Activated CD4-positive, alpha-beta T cell treated with anti-CD3 and anti-CD28 coated beads, Interleukin-2, amount 10 ng/mL, durations not matched to agents 24 days and 14 days (primary cell): ENCODE measurements at regions of chr7 and their contacts with region 1.

Region 1: GRCh38 chr7:82572195-82572880 is 128.8 kb upstream of the CACNA2D1 start:
- DNase-seq: peak; percentile 90
- H3K4me3 Mint-ChIP-seq: no peak overlapping the region
- H3K27ac Mint-ChIP-seq: no peak overlapping the region
- H3K4me1 Mint-ChIP-seq: no peaks in the 10 kb centered on the region
- H3K27me3 Mint-ChIP-seq: no peaks in the 10 kb centered on the region

Region 2: DNA sequence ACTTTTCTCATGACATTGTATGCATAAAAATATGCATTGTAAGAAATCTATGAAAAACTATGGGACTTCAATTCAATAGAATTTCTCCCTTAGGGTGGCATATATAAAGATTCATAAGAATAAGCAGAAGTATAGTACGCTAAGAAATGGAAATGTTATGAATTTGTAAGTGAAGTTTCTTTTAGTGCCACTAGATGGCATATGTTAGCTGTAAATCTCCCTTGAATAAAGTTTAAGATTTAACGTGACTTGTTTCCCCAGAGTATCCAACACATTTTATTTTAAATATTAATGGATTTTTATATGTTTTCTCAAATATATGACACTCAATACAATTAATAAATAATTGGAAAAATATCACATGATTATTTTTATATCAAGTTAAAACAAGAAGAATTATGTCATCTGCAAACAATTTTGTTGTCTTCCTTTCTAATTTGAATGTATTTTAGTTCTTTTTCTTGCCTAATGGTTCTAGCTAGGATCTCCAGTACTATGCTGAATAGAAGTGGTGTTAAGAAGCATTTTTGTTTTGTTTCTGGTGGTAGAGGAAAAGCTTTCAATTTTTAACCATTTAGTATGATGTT is 1089.6 kb before region 1 on chr7:
- intact Hi-C with region 1: loop called (anchors 1 kb)
- DNase-seq: no peak
- H3K4me3 Mint-ChIP-seq: no peak overlapping the region
- H3K27ac Mint-ChIP-seq: no peak overlapping the region
- H3K4me1 Mint-ChIP-seq: no peaks in the 10 kb centered on the region
- H3K27me3 Mint-ChIP-seq: no peaks in the 10 kb centered on the region

Region 3: GRCh38 chr7:81499262-81500116 is 1072.8 kb before region 1 on chr7:
- intact Hi-C with region 1: loop called (anchors 5 kb)
- DNase-seq: no peak
- H3K4me3 Mint-ChIP-seq: no peak overlapping the region
- H3K27ac Mint-ChIP-seq: no peak overlapping the region
- H3K4me1 Mint-ChIP-seq: no peaks in the 10 kb centered on the region
- H3K27me3 Mint-ChIP-seq: no peaks in the 10 kb centered on the region

Region 4: GRCh38 chr7:82234457-82235049 is 337.8 kb before region 1 on chr7:
- intact Hi-C with region 1: loop called (anchors 2 kb)
- DNase-seq: no peak
- H3K4me3 Mint-ChIP-seq: no peak overlapping the region
- H3K27ac Mint-ChIP-seq: no peak overlapping the region
- H3K4me1 Mint-ChIP-seq: no peaks in the 10 kb centered on the region
- H3K27me3 Mint-ChIP-seq: no peaks in the 10 kb centered on the region

Region 5: DNA sequence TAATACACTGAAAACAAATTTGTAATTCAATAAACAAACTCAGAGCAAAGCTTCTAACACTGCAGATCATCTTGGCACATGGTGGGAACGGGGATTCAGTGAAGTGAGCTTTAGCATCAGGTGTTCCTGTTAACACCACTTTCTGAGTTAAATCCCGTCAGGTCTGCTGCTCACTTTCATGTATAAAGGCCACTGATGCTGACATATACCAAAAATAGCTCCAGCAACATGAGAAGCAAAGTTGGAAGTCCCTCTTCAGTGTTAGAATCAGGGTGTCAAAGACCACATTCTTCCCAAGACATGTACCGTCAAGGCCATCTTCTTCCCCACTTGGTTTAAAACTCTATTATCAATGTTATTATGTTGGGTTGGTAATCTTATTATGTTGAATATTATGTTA is 117.0 kb before region 1 on chr7:
- intact Hi-C with region 1: no loop called
- DNase-seq: no peak
- H3K4me3 Mint-ChIP-seq: no peak overlapping the region
- H3K27ac Mint-ChIP-seq: no peak overlapping the region
- H3K4me1 Mint-ChIP-seq: no peaks in the 10 kb centered on the region
- H3K27me3 Mint-ChIP-seq: no peaks in the 10 kb centered on the region